Vagina (tissue), 2 donors: ENCODE measurements at regions of chr1 and their contacts with region 1.

Region 1: DNA sequence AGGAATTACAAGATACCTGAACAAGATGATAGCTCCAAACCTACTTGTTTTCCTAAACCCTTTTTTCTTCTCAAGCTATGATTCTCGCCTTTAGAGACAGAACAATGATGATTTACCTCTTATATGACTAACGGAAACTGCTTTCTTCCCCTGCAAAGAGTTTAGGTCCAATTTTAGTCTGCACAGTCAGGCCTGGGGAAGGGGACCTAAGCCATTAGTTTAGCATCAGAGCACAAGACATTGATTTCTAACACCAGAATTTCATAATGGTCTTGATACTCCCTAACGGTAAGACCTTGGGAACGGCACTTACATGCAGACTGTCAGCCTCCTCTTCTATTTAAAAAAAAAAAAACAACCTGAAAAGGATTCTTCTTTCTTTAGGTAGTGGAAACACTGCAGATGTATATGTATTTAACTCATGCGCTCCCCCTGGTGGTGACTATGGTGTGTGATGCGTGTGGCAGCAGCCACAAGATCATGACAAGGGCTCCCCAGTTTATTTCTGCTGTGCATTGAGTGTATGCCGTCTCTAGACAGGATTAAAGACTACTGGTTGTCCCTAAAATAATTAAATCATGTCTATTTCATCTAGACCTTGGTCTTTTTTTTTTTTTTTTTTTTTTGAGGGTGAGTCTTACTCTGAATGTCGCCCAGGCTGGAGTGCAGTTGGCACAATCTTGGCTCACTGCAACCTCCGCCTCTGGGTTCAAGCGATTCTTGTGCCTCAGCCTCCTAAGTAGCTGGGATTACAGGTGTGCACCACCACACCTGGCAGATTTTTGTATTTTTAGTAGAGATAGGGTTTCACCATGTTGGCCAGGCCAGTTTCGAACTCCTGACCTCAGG is 37.3 kb upstream of the TMEM222 start:
- DNase-seq: no peak
- H3K4me3 ChIP-seq: no peak overlapping the region
- H3K27ac ChIP-seq: no peak overlapping the region
- H3K4me1 ChIP-seq: no peaks in the 10 kb centered on the region
- H3K27me3 ChIP-seq: no peaks in the 10 kb centered on the region
- CTCF ChIP-seq: peak; percentile 68 to 84 (median 79)
- POLR2A ChIP-seq: no peak

Region 2: GRCh38 chr1:27102707-27103491 is 181.8 kb before region 1 on chr1:
- intact Hi-C with region 1: loop called (anchors 5 kb)
- DNase-seq: no peak
- H3K4me3 ChIP-seq: no peak overlapping the region
- H3K27ac ChIP-seq: no peak overlapping the region
- H3K4me1 ChIP-seq: peaks cover 27% of the 10 kb centered on the region
- H3K27me3 ChIP-seq: no peaks in the 10 kb centered on the region
- CTCF ChIP-seq: peak; percentile 94 to 99 (median 97)
- POLR2A ChIP-seq: no peak

Region 3: DNA sequence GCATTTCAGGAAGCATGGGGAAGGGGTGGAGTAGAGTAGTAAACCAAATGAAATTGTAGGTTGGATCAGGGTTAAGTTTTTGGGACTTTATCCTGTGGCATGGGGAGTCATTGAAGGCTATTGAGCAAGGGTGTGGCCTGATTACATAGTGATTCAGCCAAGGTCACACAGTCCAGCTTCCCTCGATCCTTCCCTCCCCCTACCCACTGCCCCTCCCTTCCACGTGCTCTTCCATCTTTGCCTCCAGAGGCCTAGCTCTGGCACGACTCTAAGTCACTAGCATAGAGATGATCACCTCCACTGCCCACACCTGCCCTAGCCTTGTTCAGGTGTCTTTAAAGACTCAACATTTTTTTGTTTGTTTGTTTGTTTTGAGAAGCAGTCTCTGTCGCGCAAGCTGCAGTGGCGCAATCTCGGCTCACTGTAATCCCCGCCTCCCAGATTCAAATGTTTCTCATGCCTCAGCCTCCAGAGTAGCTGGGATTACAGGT is 92.6 kb before region 1 on chr1:
- intact Hi-C with region 1: loop called (anchors 10 kb)
- DNase-seq: no peak
- H3K4me3 ChIP-seq: no peak overlapping the region
- H3K27ac ChIP-seq: no peak overlapping the region
- H3K4me1 ChIP-seq: no peaks in the 10 kb centered on the region
- H3K27me3 ChIP-seq: no peaks in the 10 kb centered on the region
- CTCF ChIP-seq: no peak
- POLR2A ChIP-seq: no peak